ENCODE measurements at regions of chr5 and their contacts with region 1.

Region 1: DNA sequence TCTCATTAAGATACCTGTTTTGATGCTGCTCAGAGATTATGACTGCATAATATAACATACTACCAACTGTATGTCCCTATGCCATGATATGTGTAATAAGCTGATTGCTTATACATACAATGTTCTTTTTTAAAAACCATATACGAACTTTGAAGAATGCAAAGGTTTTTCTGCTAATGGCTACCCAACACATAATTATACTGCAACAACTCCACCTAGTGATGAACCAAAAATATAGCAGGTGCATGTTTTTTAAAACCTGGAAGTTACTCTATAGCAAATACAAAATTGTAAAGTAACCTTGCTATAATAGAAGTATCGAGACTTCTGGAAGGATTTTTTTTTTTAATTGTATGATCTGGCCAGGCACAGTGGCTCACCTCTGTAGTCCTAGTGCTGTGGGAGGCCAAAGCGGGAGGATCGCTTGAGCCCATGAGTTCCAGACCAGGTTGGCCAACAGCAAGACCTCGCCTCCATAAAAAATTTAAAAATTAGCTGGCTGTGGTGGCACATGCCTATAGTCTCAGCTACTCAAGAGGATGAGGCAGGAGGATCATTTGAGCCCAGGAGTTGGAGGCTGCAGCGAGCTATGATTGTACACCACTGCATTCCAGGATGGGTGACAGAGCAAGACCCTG is 49.1 kb downstream of the HOMER1 start:
- DNase-seq: peak; percentile 31
- H3K4me3 Mint-ChIP-seq: no peak overlapping the region
- H3K27ac Mint-ChIP-seq: no peak overlapping the region
- H3K4me1 Mint-ChIP-seq: no peaks in the 10 kb centered on the region
- H3K27me3 Mint-ChIP-seq: no peaks in the 10 kb centered on the region
- CTCF ChIP-seq: peak; percentile 58

Region 2: DNA sequence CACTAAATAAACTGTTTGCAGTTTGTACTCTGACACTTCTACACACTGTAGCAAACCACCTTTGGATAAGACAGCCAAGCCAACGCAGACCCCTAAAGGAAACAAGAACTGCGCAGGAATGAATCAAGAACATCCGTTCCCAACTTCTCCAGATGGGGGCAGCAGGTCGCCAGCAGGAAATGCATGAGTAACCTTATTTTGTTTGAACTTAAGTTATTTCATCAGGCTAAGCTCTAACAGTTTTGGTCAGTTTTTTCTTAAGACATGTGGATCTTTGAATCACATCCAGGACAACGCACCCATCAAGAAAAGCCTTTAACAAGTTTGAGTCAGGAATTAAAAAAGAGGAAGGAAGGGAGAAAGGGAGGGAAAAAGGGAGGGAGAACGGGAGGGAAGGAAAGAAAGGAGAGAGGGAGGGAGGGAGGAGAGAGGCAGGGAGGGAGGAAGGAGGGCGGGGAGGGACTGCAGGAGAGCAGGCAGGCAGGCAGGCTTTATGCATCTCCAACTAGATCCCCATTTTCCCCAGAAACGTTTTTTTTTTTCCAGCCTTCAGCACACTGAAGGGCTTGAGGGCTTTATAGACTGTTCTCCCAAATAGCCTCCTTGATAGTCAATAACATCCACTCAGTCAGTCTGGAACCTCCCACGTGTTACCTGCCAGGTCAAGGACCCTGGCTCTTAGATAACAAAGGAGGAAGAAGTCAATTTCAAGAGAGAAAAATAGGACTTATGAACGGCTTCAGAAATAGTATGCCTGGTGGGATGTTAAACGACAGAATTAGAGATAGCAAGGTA is 331.0 kb before region 1 on chr5:
- CTCF ChIA-PET with region 1: interaction called, 83 read pairs
- POLR2A ChIA-PET with region 1: interaction called, 3 read pairs
- intact Hi-C with region 1: loop called (anchors 1 kb)
- DNase-seq: peak; percentile 84
- H3K4me3 Mint-ChIP-seq: peak overlapping the region; percentile 63
- H3K27ac Mint-ChIP-seq: peak overlapping the region; percentile 72
- H3K4me1 Mint-ChIP-seq: peaks cover 12% of the 10 kb centered on the region
- H3K27me3 Mint-ChIP-seq: no peaks in the 10 kb centered on the region
- CTCF ChIP-seq: peak; percentile 72

Region 3: DNA sequence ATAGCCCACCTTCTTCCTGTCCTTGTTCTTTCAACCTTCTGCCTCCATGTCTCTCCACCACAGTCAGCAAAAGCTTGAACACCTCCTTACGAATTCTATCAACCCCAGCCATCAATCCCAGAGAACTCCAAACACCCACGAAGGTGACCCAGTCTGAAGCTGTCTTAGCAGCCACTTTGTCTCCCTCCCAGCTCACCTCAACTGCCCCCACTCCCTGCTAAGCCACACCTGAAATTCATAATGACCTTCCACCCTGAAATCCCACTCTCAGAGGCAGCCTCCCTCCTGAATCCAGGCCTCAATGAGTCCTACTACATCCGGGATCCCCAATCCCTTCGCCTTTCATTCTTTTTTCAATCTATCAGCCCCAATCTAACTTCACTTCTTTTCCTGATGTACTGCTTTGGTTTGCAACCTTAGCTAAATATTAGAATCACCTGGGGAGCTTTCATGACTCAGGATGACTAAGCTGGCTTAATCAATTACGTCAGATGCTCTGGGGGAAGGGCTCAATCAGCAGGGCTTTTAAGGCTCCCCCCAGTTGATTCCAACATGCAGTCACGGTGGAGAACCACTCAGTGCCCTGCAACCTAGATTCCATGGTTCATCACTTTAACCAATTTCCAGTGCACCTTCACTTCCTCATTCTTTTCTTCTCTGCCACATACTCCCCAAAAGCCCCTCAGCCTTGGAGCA is 321.0 kb before region 1 on chr5:
- CTCF ChIA-PET with region 1: interaction called, 13 read pairs
- POLR2A ChIA-PET with region 1: no interaction called
- intact Hi-C with region 1: no loop called
- DNase-seq: peak; percentile 62
- H3K4me3 Mint-ChIP-seq: no peak overlapping the region
- H3K27ac Mint-ChIP-seq: peak overlapping the region; percentile 57
- H3K4me1 Mint-ChIP-seq: peaks cover 19% of the 10 kb centered on the region
- H3K27me3 Mint-ChIP-seq: no peaks in the 10 kb centered on the region
- CTCF ChIP-seq: no peak

Region 4: GRCh38 chr5:79255786-79256557 is 208.8 kb before region 1 on chr5:
- CTCF ChIA-PET with region 1: interaction called, 11 read pairs
- POLR2A ChIA-PET with region 1: no interaction called
- intact Hi-C with region 1: no loop called
- DNase-seq: peak; percentile 69
- H3K4me3 Mint-ChIP-seq: no peak overlapping the region
- H3K27ac Mint-ChIP-seq: peak overlapping the region; percentile 49
- H3K4me1 Mint-ChIP-seq: peaks cover 17% of the 10 kb centered on the region
- H3K27me3 Mint-ChIP-seq: no peaks in the 10 kb centered on the region
- CTCF ChIP-seq: peak; percentile 36

Region 5: DNA sequence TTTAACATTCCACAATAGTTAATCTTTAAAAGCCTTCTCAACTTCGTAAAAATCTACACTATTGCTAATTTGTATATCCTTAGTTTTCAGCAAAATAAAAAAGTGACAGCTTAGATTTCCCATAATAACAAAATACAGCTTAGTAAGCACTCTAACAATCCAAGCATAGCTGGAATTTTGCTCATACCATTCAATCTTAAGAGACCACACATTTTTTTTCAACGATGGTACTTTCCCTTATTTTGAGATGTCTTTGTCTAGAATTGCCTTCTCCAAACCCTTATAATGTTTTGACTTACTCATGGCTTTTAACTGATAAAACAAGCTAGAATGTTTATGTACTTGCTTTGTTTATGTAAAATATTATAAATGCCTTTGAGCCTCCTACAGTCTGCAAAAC is 16.5 kb before region 1 on chr5:
- CTCF ChIA-PET with region 1: interaction called, 19 read pairs
- POLR2A ChIA-PET with region 1: no interaction called
- intact Hi-C with region 1: no loop called
- DNase-seq: no peak
- H3K4me3 Mint-ChIP-seq: no peak overlapping the region
- H3K27ac Mint-ChIP-seq: peak overlapping the region; percentile 23
- H3K4me1 Mint-ChIP-seq: no peaks in the 10 kb centered on the region
- H3K27me3 Mint-ChIP-seq: no peaks in the 10 kb centered on the region
- CTCF ChIP-seq: no peak

Region 6: DNA sequence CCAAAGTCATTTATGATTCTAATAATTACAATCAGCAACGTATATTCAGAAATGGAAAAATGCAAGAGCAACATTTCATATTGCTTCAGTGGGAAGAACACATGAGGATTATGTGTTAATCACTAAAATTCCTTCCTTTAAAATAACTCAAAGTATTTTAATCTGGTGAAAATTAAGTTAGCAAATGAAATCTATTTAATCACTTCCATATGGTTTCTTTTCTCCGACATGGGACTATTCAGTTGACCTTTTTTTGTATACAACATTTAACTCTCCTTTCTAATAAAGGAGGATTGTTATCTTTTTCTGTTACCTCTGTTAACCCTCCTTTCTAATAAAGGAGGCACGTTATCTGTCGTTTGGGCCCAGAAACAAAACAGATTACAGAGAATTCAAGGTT is 10.8 kb before region 1 on chr5:
- CTCF ChIA-PET with region 1: interaction called, 11 read pairs
- POLR2A ChIA-PET with region 1: no interaction called
- intact Hi-C with region 1: no loop called
- DNase-seq: no peak
- H3K4me3 Mint-ChIP-seq: no peak overlapping the region
- H3K27ac Mint-ChIP-seq: no peak overlapping the region
- H3K4me1 Mint-ChIP-seq: no peaks in the 10 kb centered on the region
- H3K27me3 Mint-ChIP-seq: no peaks in the 10 kb centered on the region
- CTCF ChIP-seq: no peak

Region 7: GRCh38 chr5:79514391-79515105 is 49.7 kb after region 1 on chr5:
- CTCF ChIA-PET with region 1: interaction called, 9 read pairs
- POLR2A ChIA-PET with region 1: interaction called, 7 read pairs
- intact Hi-C with region 1: loop called (anchors 2 kb)
- DNase-seq: peak; percentile 95
- H3K4me3 Mint-ChIP-seq: peak overlapping the region; percentile 94
- H3K27ac Mint-ChIP-seq: peak overlapping the region; percentile 97
- H3K4me1 Mint-ChIP-seq: peaks cover 26% of the 10 kb centered on the region
- H3K27me3 Mint-ChIP-seq: no peaks in the 10 kb centered on the region
- CTCF ChIP-seq: no peak

Region 8: DNA sequence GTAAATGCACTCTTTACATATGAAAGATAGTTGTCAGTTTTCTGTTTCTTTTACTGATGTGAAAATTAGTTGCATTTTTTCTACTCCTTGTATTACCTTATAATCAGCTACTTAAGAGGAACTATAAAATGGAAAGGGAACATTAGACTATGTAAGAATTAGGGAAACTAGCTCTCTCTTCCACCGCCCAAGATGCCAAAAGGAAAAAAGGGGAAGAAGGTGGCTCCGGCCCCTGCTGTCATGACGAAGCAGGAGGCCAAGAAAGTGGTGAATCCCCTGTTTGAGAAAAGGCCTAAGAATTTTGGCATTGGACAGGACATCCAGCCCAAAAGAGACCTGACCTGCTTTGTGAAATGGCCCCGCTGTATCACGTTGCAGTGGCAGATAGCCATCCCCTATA is 64.3 kb after region 1 on chr5:
- CTCF ChIA-PET with region 1: no interaction called
- POLR2A ChIA-PET with region 1: no interaction called
- intact Hi-C with region 1: no loop called
- DNase-seq: no peak
- H3K4me3 Mint-ChIP-seq: no peak overlapping the region
- H3K27ac Mint-ChIP-seq: no peak overlapping the region
- H3K4me1 Mint-ChIP-seq: no peaks in the 10 kb centered on the region
- H3K27me3 Mint-ChIP-seq: no peaks in the 10 kb centered on the region
- CTCF ChIP-seq: no peak

Region 9: GRCh38 chr5:80516826-80517225 is 1052.0 kb after region 1 on chr5:
- CTCF ChIA-PET with region 1: no interaction called
- POLR2A ChIA-PET with region 1: no interaction called
- intact Hi-C with region 1: no loop called
- DNase-seq: peak; percentile 91
- H3K4me3 Mint-ChIP-seq: no peak overlapping the region
- H3K27ac Mint-ChIP-seq: peak overlapping the region; percentile 65
- H3K4me1 Mint-ChIP-seq: peaks cover 7% of the 10 kb centered on the region
- H3K27me3 Mint-ChIP-seq: no peaks in the 10 kb centered on the region
- CTCF ChIP-seq: no peak